Activated CD4-positive, alpha-beta T cell treated with anti-CD3 and anti-CD28 coated beads, Interleukin-2, amount 10 ng/mL, durations not matched to agents 24 days and 14 days (primary cell): ENCODE measurements at regions of chr5 and their contacts with region 1.

Region 1: DNA sequence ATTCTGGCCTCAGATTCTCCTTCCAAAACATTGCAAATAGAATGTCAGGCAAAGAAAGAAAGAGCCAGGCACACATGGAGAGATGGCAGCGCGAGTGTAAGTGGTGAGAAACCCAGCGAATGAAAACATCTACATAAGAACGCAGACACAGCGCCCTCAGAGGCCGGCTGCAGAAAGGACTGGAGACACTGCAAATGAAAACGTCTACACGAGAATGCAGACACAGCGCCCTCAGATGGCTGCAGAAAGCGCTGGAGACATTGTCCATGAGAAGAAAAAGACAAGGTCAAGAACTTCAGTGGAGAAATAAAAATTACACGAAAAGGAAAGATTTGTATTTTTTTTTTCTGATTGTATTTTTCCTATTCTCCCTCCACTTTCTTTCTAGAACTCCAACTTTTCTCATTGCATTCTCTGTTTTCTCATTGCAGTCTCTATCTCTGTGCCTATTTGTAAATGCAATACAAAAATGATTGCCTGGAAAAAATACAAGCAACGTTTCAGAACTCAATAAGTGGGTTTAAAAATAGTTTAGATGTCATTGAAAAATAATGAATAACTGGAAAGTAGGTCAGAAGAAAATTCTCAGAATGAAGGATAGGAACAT is 117.9 kb upstream of the LPCAT1 start:
- DNase-seq: peak; percentile 93
- H3K4me3 Mint-ChIP-seq: no peak overlapping the region
- H3K27ac Mint-ChIP-seq: no peak overlapping the region
- H3K4me1 Mint-ChIP-seq: peaks cover 8% of the 10 kb centered on the region
- H3K27me3 Mint-ChIP-seq: peaks cover 37% of the 10 kb centered on the region

Region 2: DNA sequence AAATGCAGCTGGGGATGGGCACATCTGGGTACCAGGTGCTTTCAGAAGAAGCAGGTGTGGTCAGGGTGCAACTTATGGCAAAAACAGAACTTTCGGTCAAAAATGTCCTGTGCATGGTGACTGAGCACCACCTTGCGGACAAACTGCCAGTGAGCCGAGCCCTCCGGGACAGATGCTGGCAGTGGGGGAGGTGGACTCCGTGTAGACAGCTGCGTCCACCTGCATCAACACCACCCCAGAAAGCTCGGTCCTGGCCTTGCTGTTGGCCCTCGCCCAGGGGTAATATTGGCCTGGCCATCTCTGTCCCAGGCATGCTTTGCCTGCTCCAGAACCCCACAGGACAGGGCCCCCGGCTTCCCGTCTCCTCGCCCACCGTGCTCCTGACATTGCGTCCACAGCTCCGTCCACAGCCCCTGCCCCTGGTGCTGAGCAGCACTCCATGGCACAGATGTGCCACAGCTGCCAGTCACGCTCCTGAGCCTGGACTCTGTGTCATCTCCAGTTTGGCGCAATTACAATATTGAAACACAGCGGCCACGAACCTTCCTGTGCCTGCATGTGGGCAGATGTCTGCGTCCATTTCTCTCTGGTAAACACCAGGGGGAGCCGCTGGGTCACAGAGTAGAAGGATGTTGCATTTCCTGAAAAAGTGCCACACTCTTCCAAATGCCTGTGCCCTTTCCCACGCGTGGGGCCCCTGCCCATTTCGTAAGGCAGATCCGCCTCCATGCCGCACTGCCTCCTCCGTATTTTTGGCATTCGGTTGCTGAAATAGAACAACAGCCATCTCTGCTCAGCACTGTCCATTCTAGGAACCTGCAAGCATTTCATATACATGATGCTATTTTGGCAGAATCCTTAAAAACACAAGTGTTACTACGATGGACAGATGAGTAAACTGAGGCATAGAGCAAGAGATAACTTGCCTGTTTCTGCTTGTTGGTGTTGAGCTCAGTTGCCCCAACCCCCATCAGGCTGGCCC is 473.6 kb before region 1 on chr5:
- intact Hi-C with region 1: loop called (anchors 1 kb)
- DNase-seq: peak; percentile 91
- H3K4me3 Mint-ChIP-seq: peak overlapping the region; percentile 68
- H3K27ac Mint-ChIP-seq: no peak overlapping the region
- H3K4me1 Mint-ChIP-seq: peaks cover 4% of the 10 kb centered on the region
- H3K27me3 Mint-ChIP-seq: peaks cover 2% of the 10 kb centered on the region

Region 3: DNA sequence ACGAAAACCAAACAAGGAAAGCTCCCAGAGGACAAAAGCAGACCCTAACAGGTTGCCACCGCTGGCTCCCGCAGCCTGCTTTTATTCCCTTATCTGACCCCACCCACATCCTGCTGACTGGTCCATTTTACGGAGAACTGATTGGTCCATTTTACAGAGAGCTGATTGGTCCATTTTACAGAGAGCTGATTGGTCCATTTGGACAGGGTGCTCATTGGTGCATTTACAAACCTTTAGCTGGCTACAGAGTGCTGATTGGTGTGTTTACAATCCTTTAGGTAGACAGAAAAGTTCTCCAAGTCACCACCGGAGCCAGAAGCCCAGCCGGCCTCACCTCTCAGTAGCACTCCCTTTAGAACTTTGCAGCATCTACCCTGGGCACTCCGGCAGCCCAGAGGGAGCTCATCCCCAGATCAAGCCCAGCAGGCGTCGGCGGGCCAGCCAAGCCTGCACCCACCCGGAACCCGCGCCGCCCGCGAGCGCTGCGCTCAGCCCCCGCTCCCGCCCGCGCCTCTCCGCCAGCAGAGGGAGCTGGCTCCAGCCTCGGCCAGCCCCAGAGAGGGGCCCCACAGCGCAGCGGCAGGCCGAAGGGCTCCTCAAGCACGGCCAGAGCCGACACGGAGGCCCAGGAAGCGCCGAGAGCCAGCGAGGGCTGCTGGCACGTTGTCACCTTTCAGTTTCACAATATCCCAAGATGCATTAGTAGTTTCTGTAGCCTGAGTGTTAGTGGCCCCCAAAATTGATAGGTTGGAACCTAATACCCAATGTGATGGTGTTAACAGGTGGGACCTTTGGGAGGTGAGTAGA is 261.4 kb before region 1 on chr5:
- intact Hi-C with region 1: loop called (anchors 1 kb)
- DNase-seq: peak; percentile 89
- H3K4me3 Mint-ChIP-seq: peak overlapping the region; percentile 75
- H3K27ac Mint-ChIP-seq: no peak overlapping the region
- H3K4me1 Mint-ChIP-seq: peaks cover 4% of the 10 kb centered on the region
- H3K27me3 Mint-ChIP-seq: peaks cover 3% of the 10 kb centered on the region

Region 4: GRCh38 chr5:1523771-1524480 is 117.7 kb before region 1 on chr5 and contains the start of gene LPCAT1:
- intact Hi-C with region 1: loop called (anchors 5 kb)
- DNase-seq: peak; percentile 95
- H3K4me3 Mint-ChIP-seq: peak within 1 kb of the TSS; percentile 89
- H3K27ac Mint-ChIP-seq: peak within 1 kb of the TSS; percentile 70
- H3K4me1 Mint-ChIP-seq: peaks cover 18% of the 10 kb centered on the region
- H3K27me3 Mint-ChIP-seq: peaks cover 5% of the 10 kb centered on the region
- total RNA-seq, gene LPCAT1: 93.2 and 95.6 TPM in 2 replicates

Region 5: DNA sequence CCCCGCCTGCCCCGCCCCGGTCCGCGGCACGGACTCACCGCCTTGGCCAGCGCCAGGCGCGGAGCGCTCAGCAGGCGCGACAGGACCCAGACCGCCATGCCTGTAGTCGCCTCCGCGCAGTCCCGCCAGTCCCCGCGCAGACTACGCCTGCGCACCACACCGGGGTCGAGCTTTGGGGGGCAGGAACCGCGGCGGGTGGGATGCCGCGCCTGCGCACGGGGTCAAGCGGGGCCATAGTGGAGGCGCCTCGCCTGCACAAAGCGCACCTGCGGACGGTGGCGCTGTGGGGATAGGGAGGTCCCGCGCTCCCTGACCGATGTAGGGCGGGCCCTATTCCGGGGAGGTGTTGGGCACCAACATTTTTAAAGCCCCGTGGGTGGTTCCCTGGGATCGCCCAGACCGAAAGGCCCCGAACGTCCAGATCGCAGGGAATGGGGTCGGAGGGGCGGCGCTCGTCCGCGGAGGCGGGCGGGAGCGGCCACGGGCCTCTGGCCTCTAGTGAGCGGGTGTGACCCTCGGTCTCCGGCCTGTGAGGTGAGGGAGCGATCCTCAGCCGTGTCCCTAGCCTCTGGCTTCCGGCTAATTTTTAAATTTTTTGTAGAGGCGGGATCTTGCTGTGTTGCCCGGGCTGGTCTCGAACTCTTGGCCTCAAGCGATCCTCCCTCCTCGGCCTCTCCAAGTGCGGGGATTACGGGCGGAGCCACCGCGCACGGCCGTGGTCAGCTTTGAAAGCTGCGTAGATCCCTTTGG is 47.1 kb before region 1 on chr5:
- intact Hi-C with region 1: loop called (anchors 5 kb)
- DNase-seq: peak; percentile 86
- H3K4me3 Mint-ChIP-seq: peak overlapping the region; percentile 81
- H3K27ac Mint-ChIP-seq: peak overlapping the region; percentile 45
- H3K4me1 Mint-ChIP-seq: peaks cover 5% of the 10 kb centered on the region
- H3K27me3 Mint-ChIP-seq: peaks cover 1% of the 10 kb centered on the region

Region 6: GRCh38 chr5:1673042-1673677 is 31.5 kb after region 1 on chr5:
- intact Hi-C with region 1: no loop called
- DNase-seq: no peak
- H3K4me3 Mint-ChIP-seq: no peak overlapping the region
- H3K27ac Mint-ChIP-seq: no peak overlapping the region
- H3K4me1 Mint-ChIP-seq: peaks cover 3% of the 10 kb centered on the region
- H3K27me3 Mint-ChIP-seq: peaks cover 64% of the 10 kb centered on the region

Region 7: DNA sequence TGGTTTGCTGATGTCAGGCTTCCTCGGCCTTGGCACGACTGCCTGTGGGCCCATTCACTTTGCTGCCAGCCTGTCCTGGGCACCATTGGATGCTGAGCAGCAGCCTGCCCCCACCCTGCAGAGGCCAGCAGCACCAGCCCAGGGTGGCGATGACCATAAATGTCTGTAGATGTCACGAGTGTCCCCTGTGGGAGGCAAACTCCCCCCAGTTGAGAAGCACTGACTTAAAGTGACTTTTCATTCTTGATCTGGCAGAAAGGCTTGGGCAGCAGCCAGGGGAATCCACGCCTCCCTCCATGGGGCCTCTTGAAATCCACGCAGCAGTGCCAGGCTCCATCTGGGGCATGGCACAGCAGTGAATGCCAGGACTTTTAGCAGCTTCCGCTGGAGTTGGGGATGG is 219.3 kb after region 1 on chr5:
- intact Hi-C with region 1: no loop called
- DNase-seq: no peak
- H3K4me3 Mint-ChIP-seq: no peak overlapping the region
- H3K27ac Mint-ChIP-seq: no peak overlapping the region
- H3K4me1 Mint-ChIP-seq: no peaks in the 10 kb centered on the region
- H3K27me3 Mint-ChIP-seq: peaks cover 1% of the 10 kb centered on the region